ENCODE measurements at regions of chr10 and their contacts with region 1.

Region 1: DNA sequence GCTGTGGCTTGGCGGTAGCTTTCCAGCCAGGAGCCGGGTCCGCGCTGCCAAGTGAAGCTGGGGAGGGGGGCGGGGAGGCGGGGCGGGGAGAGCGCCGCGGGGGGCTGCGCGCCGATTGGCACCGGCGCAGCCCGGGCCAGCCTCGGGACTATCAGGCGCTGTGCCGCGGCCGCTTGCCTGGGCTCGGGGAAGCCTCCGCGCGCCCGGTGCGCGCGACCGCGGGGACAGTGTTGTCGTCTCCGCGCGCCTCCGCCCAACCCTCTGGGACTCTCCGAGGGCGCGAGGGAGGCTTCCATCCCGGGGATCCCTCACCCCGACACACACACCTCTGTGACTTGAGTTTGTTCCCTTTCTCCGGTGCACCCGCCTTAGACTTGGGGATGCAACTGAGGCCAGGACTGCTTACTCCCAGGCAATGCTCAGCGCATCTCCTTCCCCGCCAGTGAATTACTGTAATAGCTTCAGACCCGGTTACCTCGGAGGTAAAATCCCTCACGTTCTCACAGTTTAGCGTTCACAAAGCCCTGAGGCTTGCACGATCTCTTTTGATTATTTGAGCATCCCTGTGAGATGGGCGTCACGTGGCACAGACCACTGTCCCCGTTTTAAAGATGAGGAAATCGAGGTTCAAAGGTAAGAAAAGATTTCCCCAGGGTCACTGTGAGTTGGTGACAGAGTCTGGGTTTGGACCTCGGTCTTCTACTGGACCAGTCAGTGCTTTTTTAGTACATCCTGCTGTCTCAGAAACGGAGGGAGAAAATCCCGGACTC is at the start of gene NKX1-2:
- DNase-seq: peak; percentile 67
- total RNA-seq, gene NKX1-2: not detected

Region 2: GRCh38 chr10:123552760-123553554 is 897.2 kb before region 1 on chr10:
- intact Hi-C with region 1: no loop called
- DNase-seq: no peak

Region 3: GRCh38 chr10:125333209-125333591 is 883.0 kb after region 1 on chr10:
- intact Hi-C with region 1: loop called in 1 of 2 experiments (anchors 5 kb)
- DNase-seq: no peak